ENCODE measurements at regions of chr22 and their contacts with region 1.

Region 1: DNA sequence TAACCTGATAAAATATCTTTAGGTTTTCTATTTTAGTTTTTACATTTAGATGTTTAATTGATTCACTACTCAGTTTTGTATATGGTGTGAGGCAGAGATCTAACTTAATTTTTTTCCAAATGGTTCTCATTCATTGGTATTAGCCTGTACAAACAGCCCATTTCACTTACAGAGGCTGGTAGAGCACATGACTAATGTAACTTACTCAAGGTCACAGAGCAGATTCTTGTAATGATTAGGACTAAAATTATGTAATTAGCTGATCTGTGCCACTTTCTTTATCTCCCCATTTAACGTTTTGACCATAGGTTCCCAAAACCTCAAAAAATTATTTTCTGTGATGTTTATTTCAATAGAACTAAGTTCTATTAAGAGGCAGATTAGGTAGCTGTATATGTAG is 16.5 kb upstream of the TNRC6B start:
- DNase-seq: no peak
- ATAC-seq: no peak
- H3K4me3 ChIP-seq: no peak overlapping the region
- H3K27ac ChIP-seq: no peak overlapping the region
- H3K4me1 ChIP-seq: peaks cover 4% of the 10 kb centered on the region; the same call in 1 of the 2 replicates
- H3K27me3 ChIP-seq: no peaks in the 10 kb centered on the region
- CTCF ChIP-seq: no peak

Region 2: DNA sequence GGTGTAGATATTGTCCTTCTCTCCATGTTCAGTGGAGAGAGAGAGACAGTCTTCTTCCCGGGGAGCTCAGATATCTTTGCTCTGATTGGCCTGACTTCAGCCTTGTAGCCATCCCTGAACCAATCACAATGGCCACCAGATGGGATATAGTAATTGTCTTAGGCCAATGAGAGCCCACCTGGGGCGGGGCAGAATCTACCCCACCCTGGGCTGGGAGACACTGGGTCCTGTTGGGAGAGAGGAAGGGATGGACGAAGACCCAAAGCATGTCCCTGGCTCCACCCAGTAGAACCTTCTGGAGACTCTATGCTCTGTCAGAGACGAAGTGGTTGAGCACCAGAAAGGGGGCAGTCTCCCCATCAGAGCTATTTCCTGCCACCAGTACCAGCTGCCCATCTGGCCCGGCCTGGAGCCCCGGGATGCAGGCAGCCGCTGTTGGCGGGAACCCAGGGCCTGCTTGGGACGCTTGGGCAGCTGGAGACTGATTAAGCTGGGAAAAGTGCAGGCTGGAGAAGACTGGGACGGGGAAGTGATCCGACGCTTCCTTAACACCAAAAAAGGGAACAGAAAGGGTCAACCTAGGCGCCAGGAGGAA is 977.1 kb before region 1 on chr22:
- CTCF ChIA-PET with region 1: no interaction called
- POLR2A ChIA-PET with region 1: no interaction called
- in situ Hi-C with region 1: no loop called
- intact Hi-C with region 1: no loop called
- DNase-seq: no peak
- ATAC-seq: no peak; the same call in 1 of the 2 replicates
- H3K4me3 ChIP-seq: no peak overlapping the region
- H3K27ac ChIP-seq: peak overlapping the region; percentile 78
- H3K4me1 ChIP-seq: peaks cover 12% of the 10 kb centered on the region
- H3K27me3 ChIP-seq: no peaks in the 10 kb centered on the region
- CTCF ChIP-seq: no peak

Region 3: GRCh38 chr22:40036591-40037225 is 124.5 kb before region 1 on chr22:
- CTCF ChIA-PET with region 1: no interaction called
- POLR2A ChIA-PET with region 1: interaction called, 10 read pairs
- in situ Hi-C with region 1: no loop called
- intact Hi-C with region 1: no loop called
- DNase-seq: peak; percentile 52
- ATAC-seq: peak; percentile 96
- H3K4me3 ChIP-seq: no peak overlapping the region
- H3K27ac ChIP-seq: no peak overlapping the region
- H3K4me1 ChIP-seq: no peaks in the 10 kb centered on the region; the same call in 1 of the 2 replicates
- H3K27me3 ChIP-seq: no peaks in the 10 kb centered on the region
- CTCF ChIP-seq: peak; percentile 86

Region 4: GRCh38 chr22:40137132-40137531 is 24.1 kb before region 1 on chr22:
- CTCF ChIA-PET with region 1: no interaction called
- POLR2A ChIA-PET with region 1: no interaction called
- in situ Hi-C with region 1: no loop called
- intact Hi-C with region 1: no loop called
- DNase-seq: no peak
- ATAC-seq: no peak
- H3K4me3 ChIP-seq: no peak overlapping the region
- H3K27ac ChIP-seq: no peak overlapping the region
- H3K4me1 ChIP-seq: no peaks in the 10 kb centered on the region
- H3K27me3 ChIP-seq: no peaks in the 10 kb centered on the region
- CTCF ChIP-seq: no peak

Region 5: DNA sequence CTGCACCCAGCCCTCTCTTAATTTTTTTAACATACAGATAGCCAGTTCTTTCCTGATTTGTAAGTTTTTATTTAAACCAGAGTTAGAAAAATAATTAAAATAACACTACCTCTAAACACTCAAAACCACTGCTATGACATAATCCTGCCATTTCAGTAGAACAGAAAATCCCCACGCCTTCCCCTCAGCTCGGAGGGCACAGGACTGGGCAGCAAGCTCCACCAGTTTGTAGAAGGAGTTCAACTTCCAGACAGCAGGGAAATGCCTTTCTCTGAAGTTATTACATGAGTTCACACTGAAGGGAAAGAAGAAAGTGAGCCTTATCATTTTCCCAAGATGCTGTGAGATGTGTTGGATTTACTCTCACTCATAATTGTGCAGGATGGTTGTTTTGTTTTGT is 360.9 kb after region 1 on chr22:
- CTCF ChIA-PET with region 1: no interaction called
- POLR2A ChIA-PET with region 1: no interaction called
- in situ Hi-C with region 1: no loop called
- intact Hi-C with region 1: no loop called
- DNase-seq: no peak
- ATAC-seq: no peak
- H3K4me3 ChIP-seq: no peak overlapping the region
- H3K27ac ChIP-seq: no peak overlapping the region
- H3K4me1 ChIP-seq: peaks cover 25% of the 10 kb centered on the region
- H3K27me3 ChIP-seq: no peaks in the 10 kb centered on the region
- CTCF ChIP-seq: no peak

Measured in Panc1 (cell line).